IMR-90 (cell line): ENCODE measurements at regions of chr18 and their contacts with region 1.

Region 1: GRCh38 chr18:28961669-28962228 is 784.8 kb upstream of the CDH2 start:
- DNase-seq: peak; percentile 22
- ATAC-seq: peak; percentile 49
- H3K4me3 ChIP-seq: no peak overlapping the region
- H3K27ac ChIP-seq: no peak overlapping the region
- H3K4me1 ChIP-seq: no peaks in the 10 kb centered on the region
- H3K27me3 ChIP-seq: no peaks in the 10 kb centered on the region
- CTCF ChIP-seq: peak; percentile 66
- POLR2A ChIP-seq: no peak
- RAD21 ChIP-seq: peak; percentile 75

Region 2: GRCh38 chr18:29181151-29181901 is 219.6 kb after region 1 on chr18:
- CTCF ChIA-PET with region 1: no interaction called
- POLR2A ChIA-PET with region 1: no interaction called
- dilution Hi-C with region 1: no loop called
- in situ Hi-C with region 1: no loop called
- intact Hi-C with region 1: loop called (anchors 1 kb)
- DNase-seq: peak; percentile 98
- ATAC-seq: peak; percentile 92
- H3K4me3 ChIP-seq: no peak overlapping the region
- H3K27ac ChIP-seq: peak overlapping the region; percentile 95
- H3K4me1 ChIP-seq: peaks cover 7% of the 10 kb centered on the region
- H3K27me3 ChIP-seq: no peaks in the 10 kb centered on the region
- CTCF ChIP-seq: no peak
- POLR2A ChIP-seq: no peak
- RAD21 ChIP-seq: no peak